Activated T-helper 2 cell treated with anti-CD3 and anti-CD28 coated beads, Interferon-gamma antibody, Interleukin-2, Interleukin-4, amounts not matched to agents 10 μg/mL and 5 μg/mL and 100 μg/mL, durations not matched to agents 14 hours and 24 hours and 36 hours (primary cell): ENCODE measurements at regions of chr11 and their contacts with region 1.

Region 1: DNA sequence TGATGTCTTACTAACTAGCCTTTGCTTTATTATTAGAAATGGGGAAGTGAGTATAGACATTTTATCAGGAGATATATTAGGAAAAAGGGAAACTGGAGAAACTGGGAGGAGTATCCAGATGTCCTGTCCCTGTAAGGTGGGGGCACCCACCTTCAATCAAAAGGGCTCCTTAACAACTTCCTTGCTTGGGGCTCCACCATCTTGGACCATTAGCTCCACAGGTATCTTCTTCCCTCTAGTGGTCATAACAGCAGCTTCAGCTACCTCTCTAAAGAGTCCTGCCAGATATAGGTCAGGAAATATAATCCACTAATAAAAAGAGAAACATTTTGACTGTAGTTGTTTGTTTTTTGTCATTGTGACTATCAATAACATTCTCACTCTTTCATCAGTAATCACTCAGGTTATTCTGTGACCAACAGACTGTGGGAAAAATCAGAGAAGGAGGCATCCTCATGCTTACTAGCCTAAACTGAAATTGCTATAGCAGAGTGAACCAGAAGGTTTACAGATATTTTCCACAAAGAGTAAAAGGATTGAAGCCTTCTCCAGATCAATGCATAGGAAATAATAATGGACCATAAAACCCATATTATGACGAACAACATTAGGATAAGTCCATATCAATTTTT is 10.4 kb downstream of the OR51B4 start:
- DNase-seq: no peak
- H3K4me3 Mint-ChIP-seq: no peak overlapping the region
- H3K27ac Mint-ChIP-seq: no peak overlapping the region
- H3K4me1 Mint-ChIP-seq: no peaks in the 10 kb centered on the region
- H3K27me3 Mint-ChIP-seq: no peaks in the 10 kb centered on the region

Region 2: GRCh38 chr11:5123802-5124521 is 167.4 kb before region 1 on chr11:
- intact Hi-C with region 1: loop called (anchors 1 kb)
- DNase-seq: peak; percentile 11
- H3K4me3 Mint-ChIP-seq: no peak overlapping the region
- H3K27ac Mint-ChIP-seq: no peak overlapping the region
- H3K4me1 Mint-ChIP-seq: no peaks in the 10 kb centered on the region
- H3K27me3 Mint-ChIP-seq: no peaks in the 10 kb centered on the region

Region 3: DNA sequence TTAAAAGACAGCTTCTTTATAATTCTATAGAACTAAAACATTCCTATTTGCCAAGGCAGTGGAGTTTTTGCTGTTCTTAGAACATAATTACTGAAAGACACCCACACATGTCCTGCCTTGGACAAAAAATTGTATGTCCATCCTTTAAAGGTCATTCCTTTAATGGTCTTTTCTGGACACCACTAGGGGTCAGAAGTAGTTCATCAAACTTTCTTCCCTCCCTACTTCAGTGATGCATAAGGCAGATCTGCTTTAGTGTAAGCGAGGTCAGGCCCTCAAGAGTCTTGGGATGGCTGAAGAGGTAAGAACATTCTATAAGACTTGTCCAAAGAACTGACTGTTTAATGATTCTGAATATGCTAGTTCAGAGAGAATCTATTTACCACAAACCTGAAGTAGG is 86.5 kb before region 1 on chr11:
- intact Hi-C with region 1: loop called (anchors 10 kb)
- DNase-seq: no peak
- H3K4me3 Mint-ChIP-seq: no peak overlapping the region
- H3K27ac Mint-ChIP-seq: no peak overlapping the region
- H3K4me1 Mint-ChIP-seq: no peaks in the 10 kb centered on the region
- H3K27me3 Mint-ChIP-seq: no peaks in the 10 kb centered on the region